ENCODE measurements at regions of chr9 and their contacts with region 1.

Region 1: GRCh38 chr9:120755827-120756434 is 37.3 kb downstream of the FBXW2 start:
- DNase-seq: no peak
- H3K4me3 ChIP-seq: no peak overlapping the region
- H3K27ac ChIP-seq: no peak overlapping the region
- H3K4me1 ChIP-seq: no peaks in the 10 kb centered on the region
- H3K27me3 ChIP-seq: no peaks in the 10 kb centered on the region
- CTCF ChIP-seq: peak; percentile 89

Region 2: GRCh38 chr9:120655005-120655622 is 100.8 kb before region 1 on chr9:
- intact Hi-C with region 1: no loop called
- DNase-seq: no peak
- H3K4me3 ChIP-seq: no peak overlapping the region
- H3K27ac ChIP-seq: no peak overlapping the region
- H3K4me1 ChIP-seq: peaks cover 11% of the 10 kb centered on the region
- H3K27me3 ChIP-seq: no peaks in the 10 kb centered on the region
- CTCF ChIP-seq: no peak

Region 3: GRCh38 chr9:120714088-120714845 is 41.7 kb before region 1 on chr9 and contains the start of gene MEGF9:
- intact Hi-C with region 1: no loop called
- DNase-seq: peak; percentile 99
- H3K4me3 ChIP-seq: peak within 1 kb of the TSS; percentile 86
- H3K27ac ChIP-seq: peak within 1 kb of the TSS; percentile 84
- H3K4me1 ChIP-seq: peaks cover 56% of the 10 kb centered on the region
- H3K27me3 ChIP-seq: no peaks in the 10 kb centered on the region
- CTCF ChIP-seq: no peak
- total RNA-seq, gene MEGF9: 5.1 TPM

Region 4: GRCh38 chr9:120856700-120857099 is 100.8 kb after region 1 on chr9:
- intact Hi-C with region 1: no loop called
- DNase-seq: no peak
- H3K4me3 ChIP-seq: no peak overlapping the region
- H3K27ac ChIP-seq: no peak overlapping the region
- H3K4me1 ChIP-seq: peaks cover 7% of the 10 kb centered on the region
- H3K27me3 ChIP-seq: no peaks in the 10 kb centered on the region
- CTCF ChIP-seq: no peak

Region 5: GRCh38 chr9:120936011-120936763 is 180.3 kb after region 1 on chr9:
- intact Hi-C with region 1: loop called (anchors 10 kb)
- DNase-seq: peak; percentile 95
- H3K4me3 ChIP-seq: peak overlapping the region; percentile 12
- H3K27ac ChIP-seq: peak overlapping the region; percentile 92
- H3K4me1 ChIP-seq: peaks cover 56% of the 10 kb centered on the region
- H3K27me3 ChIP-seq: no peaks in the 10 kb centered on the region
- CTCF ChIP-seq: peak; percentile 95

Region 6: DNA sequence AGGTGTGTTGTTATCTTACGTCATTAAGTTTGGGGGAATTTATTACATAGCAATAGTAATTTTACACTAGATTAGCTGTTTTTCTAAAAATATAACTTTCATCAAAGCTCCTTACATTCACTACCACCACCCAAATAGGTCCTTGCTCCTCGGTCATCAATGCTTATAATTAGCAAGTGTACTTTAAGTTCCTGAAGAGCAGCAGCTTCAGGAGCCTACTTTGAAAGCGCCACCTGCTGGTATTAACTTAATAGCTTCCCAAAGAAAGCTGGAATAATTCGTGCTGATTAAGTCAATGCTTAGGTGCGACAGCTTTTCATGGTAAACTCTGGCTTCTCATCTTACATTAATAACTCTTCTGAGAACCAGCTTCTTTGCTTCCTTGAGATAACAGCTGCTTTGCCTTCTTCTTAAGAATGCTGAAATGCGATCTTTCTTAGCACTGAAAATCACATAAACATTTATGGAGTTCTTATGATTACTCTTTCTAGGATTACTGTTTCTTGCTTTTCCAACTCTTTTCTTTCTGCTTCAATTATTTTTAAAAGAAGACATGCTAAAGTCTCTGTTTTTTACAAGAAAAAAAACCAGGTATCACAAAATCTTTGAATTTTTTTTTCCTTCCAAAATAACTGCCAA is 304.2 kb after region 1 on chr9:
- intact Hi-C with region 1: loop called (anchors 5 kb)
- DNase-seq: no peak
- H3K4me3 ChIP-seq: no peak overlapping the region
- H3K27ac ChIP-seq: no peak overlapping the region
- H3K4me1 ChIP-seq: no peaks in the 10 kb centered on the region
- H3K27me3 ChIP-seq: no peaks in the 10 kb centered on the region
- CTCF ChIP-seq: peak; percentile 83